CD8-positive, alpha-beta memory T cell (primary cell): ENCODE measurements at regions of chr17 and their contacts with region 1.

Region 1: GRCh38 chr17:3308603-3309002 is 10.4 kb upstream of the OR3A1 start:
- DNase-seq: no peak
- H3K4me3 ChIP-seq: no peak overlapping the region
- H3K4me3 Mint-ChIP-seq: no peak overlapping the region
- H3K27ac ChIP-seq: no peak overlapping the region
- H3K27ac Mint-ChIP-seq: no peak overlapping the region
- H3K4me1 ChIP-seq: no peaks in the 10 kb centered on the region
- H3K4me1 Mint-ChIP-seq: no peaks in the 10 kb centered on the region
- H3K27me3 ChIP-seq: no peaks in the 10 kb centered on the region
- H3K27me3 Mint-ChIP-seq: peaks cover 3 to 10% of the 10 kb centered on the region in 2 donors

Region 2: GRCh38 chr17:3282901-3283300 is 25.7 kb before region 1 on chr17:
- CTCF ChIA-PET with region 1: no interaction called
- POLR2A ChIA-PET with region 1: interaction called, 11 read pairs
- DNase-seq: no peak
- H3K4me3 ChIP-seq: no peak overlapping the region
- H3K4me3 Mint-ChIP-seq: no peak overlapping the region
- H3K27ac ChIP-seq: no peak overlapping the region
- H3K27ac Mint-ChIP-seq: no peak overlapping the region
- H3K4me1 ChIP-seq: no peaks in the 10 kb centered on the region
- H3K4me1 Mint-ChIP-seq: no peaks in the 10 kb centered on the region
- H3K27me3 ChIP-seq: no peaks in the 10 kb centered on the region
- H3K27me3 Mint-ChIP-seq: peaks cover 5 to 18% of the 10 kb centered on the region in 2 donors

Region 3: GRCh38 chr17:3512505-3513171 is 204.0 kb after region 1 on chr17:
- CTCF ChIA-PET with region 1: no interaction called
- POLR2A ChIA-PET with region 1: no interaction called
- DNase-seq: no peak
- H3K4me3 ChIP-seq: no peak overlapping the region
- H3K4me3 Mint-ChIP-seq: no peak overlapping the region
- H3K27ac ChIP-seq: no peak overlapping the region
- H3K27ac Mint-ChIP-seq: no peak overlapping the region
- H3K4me1 ChIP-seq: no peaks in the 10 kb centered on the region
- H3K4me1 Mint-ChIP-seq: peaks cover 5 to 10% (median 7%) of the 10 kb centered on the region in 3 donors
- H3K27me3 ChIP-seq: no peaks in the 10 kb centered on the region
- H3K27me3 Mint-ChIP-seq: peaks cover 2 to 15% of the 10 kb centered on the region in 2 donors